ENCODE measurements at regions of chr10 and their contacts with region 1.

Region 1: DNA sequence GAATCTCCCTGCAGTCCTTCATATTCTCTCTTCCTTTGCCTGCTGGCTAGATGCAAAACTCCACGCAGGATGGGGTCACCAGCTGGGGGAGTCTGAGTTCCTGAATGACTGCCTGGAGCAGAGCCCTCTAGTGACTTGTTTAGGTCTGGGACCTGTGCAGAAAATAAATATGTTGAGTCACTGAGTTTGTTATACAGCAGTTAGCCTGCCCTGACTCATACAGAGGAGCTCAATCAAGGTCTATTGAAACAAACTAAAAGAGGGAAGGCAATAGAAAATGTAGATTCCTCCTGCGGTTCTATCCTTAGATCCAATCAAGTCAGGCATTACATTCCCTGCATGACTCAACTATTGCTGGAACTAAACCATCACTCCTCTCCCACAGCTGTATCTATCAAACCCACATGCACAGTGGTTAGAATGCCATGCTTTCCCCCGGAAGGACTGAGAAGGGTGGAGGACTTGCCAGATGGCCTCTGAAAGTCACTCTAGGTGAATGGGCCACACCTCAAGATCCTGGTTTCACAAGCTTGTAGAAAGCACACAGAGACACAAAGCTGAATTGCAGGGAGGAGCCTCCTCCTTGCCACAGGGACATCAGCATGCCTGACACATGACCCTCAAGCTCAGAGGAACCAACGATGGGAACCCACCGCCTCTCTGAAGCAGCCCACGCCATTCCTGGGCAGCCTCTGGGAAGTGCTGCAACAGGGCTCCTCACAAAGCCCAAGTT is 73.9 kb downstream of the SH3PXD2A start:
- DNase-seq: peak; percentile 55
- ATAC-seq: peak; percentile 84
- H3K4me3 Mint-ChIP-seq: no peak overlapping the region
- H3K27ac Mint-ChIP-seq: peak overlapping the region; percentile 58
- H3K4me1 Mint-ChIP-seq: peaks cover 16% of the 10 kb centered on the region
- H3K27me3 Mint-ChIP-seq: peaks cover 37% of the 10 kb centered on the region

Region 2: GRCh38 chr10:103752680-103753248 is 28.7 kb before region 1 on chr10:
- CTCF ChIA-PET with region 1: interaction called, 13 read pairs
- DNase-seq: no peak
- ATAC-seq: no peak
- H3K4me3 Mint-ChIP-seq: no peak overlapping the region
- H3K27ac Mint-ChIP-seq: no peak overlapping the region
- H3K4me1 Mint-ChIP-seq: peaks cover 43% of the 10 kb centered on the region
- H3K27me3 Mint-ChIP-seq: peaks cover 5% of the 10 kb centered on the region

Region 3: GRCh38 chr10:103759100-103759781 is 22.3 kb before region 1 on chr10:
- CTCF ChIA-PET with region 1: interaction called, 13 read pairs
- DNase-seq: peak; percentile 80
- ATAC-seq: peak; percentile 77
- H3K4me3 Mint-ChIP-seq: peak overlapping the region; percentile 8
- H3K27ac Mint-ChIP-seq: peak overlapping the region; percentile 82
- H3K4me1 Mint-ChIP-seq: peaks cover 66% of the 10 kb centered on the region
- H3K27me3 Mint-ChIP-seq: no peaks in the 10 kb centered on the region

Region 4: GRCh38 chr10:103765981-103766380 is 15.5 kb before region 1 on chr10:
- CTCF ChIA-PET with region 1: interaction called, 15 read pairs
- DNase-seq: peak; percentile 78
- ATAC-seq: peak; percentile 63
- H3K4me3 Mint-ChIP-seq: no peak overlapping the region
- H3K27ac Mint-ChIP-seq: peak overlapping the region; percentile 56
- H3K4me1 Mint-ChIP-seq: peaks cover 58% of the 10 kb centered on the region
- H3K27me3 Mint-ChIP-seq: no peaks in the 10 kb centered on the region

Measured in activated CD8-positive, alpha-beta memory T cell treated with anti-CD3 and anti-CD28 coated beads, Interleukin-2, amount 10 ng/mL, durations not matched to agents 7 days and 5 days (primary cell).